Mammary epithelial cell (primary cell): ENCODE measurements at regions of chr1 and their contacts with region 1.

Region 1: DNA sequence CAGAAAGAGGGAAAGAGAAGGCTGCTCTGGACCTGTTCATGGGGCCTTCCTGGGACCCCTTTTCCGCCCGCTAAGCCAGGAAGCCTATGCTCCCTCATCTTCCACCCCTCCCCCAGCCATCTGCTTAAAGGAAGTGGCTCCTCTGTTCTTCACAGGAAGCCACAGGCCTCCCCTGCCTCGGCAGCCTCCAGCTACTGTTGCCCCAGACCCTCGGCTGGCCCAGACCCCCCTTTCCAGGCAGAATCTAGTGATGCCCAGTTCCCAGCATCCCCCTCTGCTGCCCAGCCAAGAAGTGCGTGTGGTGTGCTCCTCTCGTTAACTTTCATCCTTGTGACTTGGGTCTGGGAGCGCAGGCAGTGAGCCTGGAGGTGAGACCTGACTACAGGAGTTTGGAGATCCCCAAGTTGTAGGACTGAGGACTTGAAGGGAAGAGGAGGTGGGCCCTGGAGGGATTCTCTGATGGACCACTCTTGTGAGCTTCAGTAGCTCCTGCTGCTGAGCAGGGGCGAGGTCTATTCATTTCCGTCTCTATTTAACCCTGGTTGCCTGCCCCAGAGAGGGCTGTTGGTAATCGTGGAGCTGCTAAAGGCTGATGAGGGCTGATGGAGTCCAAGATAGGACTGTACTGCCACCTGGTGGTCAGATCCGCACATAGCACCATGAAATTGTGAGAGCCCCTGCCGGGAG is 9.1 kb downstream of the IFI6 start:
- DNase-seq: peak; percentile 62
- H3K4me3 ChIP-seq: no peak overlapping the region
- H3K27ac ChIP-seq: no peak overlapping the region
- H3K4me1 ChIP-seq: peaks cover 14% of the 10 kb centered on the region
- H3K27me3 ChIP-seq: no peaks in the 10 kb centered on the region
- CTCF ChIP-seq: peak; percentile 81

Region 2: GRCh38 chr1:27402349-27402754 is 260.5 kb before region 1 on chr1:
- CTCF ChIA-PET with region 1: no interaction called
- dilution Hi-C with region 1: no loop called
- in situ Hi-C with region 1: no loop called
- intact Hi-C with region 1: loop called (anchors 1 kb)
- DNase-seq: peak; percentile 54
- H3K4me3 ChIP-seq: no peak overlapping the region
- H3K27ac ChIP-seq: no peak overlapping the region
- H3K4me1 ChIP-seq: peaks cover 30% of the 10 kb centered on the region
- H3K27me3 ChIP-seq: no peaks in the 10 kb centered on the region
- CTCF ChIP-seq: peak; percentile 65 to 76

Region 3: GRCh38 chr1:27616441-27616840 is 46.4 kb before region 1 on chr1:
- CTCF ChIA-PET with region 1: no interaction called
- dilution Hi-C with region 1: loop called (anchors 5 kb)
- in situ Hi-C with region 1: loop called in 1 of 2 experiments (anchors 5 kb)
- intact Hi-C with region 1: no loop called
- DNase-seq: no peak
- H3K4me3 ChIP-seq: no peak overlapping the region
- H3K27ac ChIP-seq: no peak overlapping the region
- H3K4me1 ChIP-seq: peaks cover 2% of the 10 kb centered on the region
- H3K27me3 ChIP-seq: no peaks in the 10 kb centered on the region
- CTCF ChIP-seq: peak in 1 of 2 donors; percentile 39

Region 4: GRCh38 chr1:27643701-27644625 is 18.9 kb before region 1 on chr1:
- CTCF ChIA-PET with region 1: interaction called, 4 read pairs
- dilution Hi-C with region 1: no loop called
- in situ Hi-C with region 1: no loop called
- intact Hi-C with region 1: loop called (anchors 1 kb)
- DNase-seq: peak; percentile 46
- H3K4me3 ChIP-seq: no peak overlapping the region
- H3K27ac ChIP-seq: no peak overlapping the region
- H3K4me1 ChIP-seq: no peaks in the 10 kb centered on the region
- H3K27me3 ChIP-seq: no peaks in the 10 kb centered on the region
- CTCF ChIP-seq: peak; percentile 72 to 79

Region 5: DNA sequence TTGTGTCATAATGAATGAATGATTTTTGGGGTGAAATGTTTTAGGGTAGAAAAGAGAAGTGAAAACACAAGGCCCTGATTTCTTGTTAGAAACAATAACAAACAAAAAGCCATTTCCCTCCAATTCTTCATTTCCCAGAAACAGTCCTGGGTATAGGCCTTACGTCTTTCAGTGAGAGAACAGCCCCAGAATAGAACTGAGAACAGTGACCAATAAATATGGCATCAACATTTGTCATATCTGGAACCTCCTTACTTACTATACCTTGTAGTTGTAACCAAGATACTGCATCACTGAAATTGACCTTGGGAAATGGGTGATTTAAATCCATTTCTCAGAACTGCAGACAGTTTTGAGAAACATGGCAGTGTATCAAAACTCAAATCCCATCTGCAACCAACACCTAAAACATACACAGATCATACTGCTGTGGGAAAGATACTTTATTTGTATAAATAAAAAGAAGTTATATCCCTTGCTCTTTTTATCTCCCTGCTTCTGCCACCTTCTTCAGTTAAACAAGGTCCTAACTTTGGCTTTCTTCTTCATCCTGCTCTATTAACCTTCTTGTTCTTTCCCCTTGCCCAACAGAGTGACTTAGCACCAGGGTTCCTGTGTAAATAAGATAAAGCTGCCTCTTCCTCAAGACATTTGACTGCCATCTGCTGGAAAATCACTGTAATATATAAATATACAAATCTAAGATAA is 316.5 kb after region 1 on chr1:
- CTCF ChIA-PET with region 1: no interaction called
- dilution Hi-C with region 1: no loop called
- in situ Hi-C with region 1: no loop called
- intact Hi-C with region 1: loop called (anchors 10 kb)
- DNase-seq: peak; percentile 41
- H3K4me3 ChIP-seq: no peak overlapping the region
- H3K27ac ChIP-seq: no peak overlapping the region
- H3K4me1 ChIP-seq: no peaks in the 10 kb centered on the region
- H3K27me3 ChIP-seq: no peaks in the 10 kb centered on the region
- CTCF ChIP-seq: peak; percentile 45 to 60